HepG2 (cell line): ENCODE measurements at regions of chr20 and their contacts with region 1.

Region 1: DNA sequence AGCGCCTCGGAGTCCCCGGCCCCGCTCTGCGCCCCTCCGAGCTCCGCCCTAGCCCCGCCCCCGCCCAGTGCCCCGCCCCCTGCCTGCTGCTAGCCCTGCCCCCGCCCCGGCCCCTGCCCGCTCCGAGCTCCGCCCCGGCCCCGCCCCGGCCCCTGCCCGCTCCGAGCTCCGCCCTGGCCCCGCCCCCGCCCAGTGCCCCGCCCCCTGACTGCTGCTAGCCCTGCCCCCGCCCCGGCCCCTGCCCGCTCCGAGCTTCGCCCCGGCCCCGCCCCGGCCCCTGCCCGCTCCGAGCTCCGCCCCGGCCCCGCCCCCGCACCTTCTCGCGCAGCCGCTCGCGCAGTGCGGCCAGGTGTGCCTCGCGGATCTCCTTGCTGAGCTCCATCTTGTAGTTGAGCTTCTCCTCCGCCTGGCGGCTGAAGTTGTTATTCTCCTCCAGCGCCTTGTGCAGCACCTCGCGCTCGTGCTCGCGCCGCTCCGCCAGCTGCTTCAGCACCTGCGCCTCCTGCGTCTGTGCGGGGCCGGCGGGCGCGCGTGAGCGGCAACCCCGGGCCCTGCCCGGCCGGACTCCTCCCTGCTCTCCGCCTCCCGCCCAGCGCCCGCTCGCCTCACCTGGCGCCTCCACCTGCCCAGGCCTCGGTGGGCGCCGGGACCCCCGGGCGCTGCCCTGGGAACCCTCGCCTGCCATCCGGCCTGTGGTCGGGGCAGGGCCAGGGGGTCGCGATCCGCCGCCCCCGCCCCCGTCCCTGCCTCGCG is 11.3 kb downstream of the STMN3 start:
- DNase-seq: peak; percentile 90
- ATAC-seq: peak; percentile 77
- H3K4me3 ChIP-seq: peak overlapping the region; percentile 49 to 81 (median 63)
- H3K27ac ChIP-seq: peak overlapping the region; percentile 56
- H3K4me1 ChIP-seq: peaks cover 20% of the 10 kb centered on the region
- H3K27me3 ChIP-seq: no peaks in the 10 kb centered on the region; a peak in 1 of 5 replicates
- CTCF ChIP-seq: peak; percentile 74
- EP300 ChIP-seq: no peak
- POLR2A ChIP-seq: peak; percentile 41 to 73; a peak in 3 of 4 replicates
- RAD21 ChIP-seq: peak; percentile 90

Region 2: DNA sequence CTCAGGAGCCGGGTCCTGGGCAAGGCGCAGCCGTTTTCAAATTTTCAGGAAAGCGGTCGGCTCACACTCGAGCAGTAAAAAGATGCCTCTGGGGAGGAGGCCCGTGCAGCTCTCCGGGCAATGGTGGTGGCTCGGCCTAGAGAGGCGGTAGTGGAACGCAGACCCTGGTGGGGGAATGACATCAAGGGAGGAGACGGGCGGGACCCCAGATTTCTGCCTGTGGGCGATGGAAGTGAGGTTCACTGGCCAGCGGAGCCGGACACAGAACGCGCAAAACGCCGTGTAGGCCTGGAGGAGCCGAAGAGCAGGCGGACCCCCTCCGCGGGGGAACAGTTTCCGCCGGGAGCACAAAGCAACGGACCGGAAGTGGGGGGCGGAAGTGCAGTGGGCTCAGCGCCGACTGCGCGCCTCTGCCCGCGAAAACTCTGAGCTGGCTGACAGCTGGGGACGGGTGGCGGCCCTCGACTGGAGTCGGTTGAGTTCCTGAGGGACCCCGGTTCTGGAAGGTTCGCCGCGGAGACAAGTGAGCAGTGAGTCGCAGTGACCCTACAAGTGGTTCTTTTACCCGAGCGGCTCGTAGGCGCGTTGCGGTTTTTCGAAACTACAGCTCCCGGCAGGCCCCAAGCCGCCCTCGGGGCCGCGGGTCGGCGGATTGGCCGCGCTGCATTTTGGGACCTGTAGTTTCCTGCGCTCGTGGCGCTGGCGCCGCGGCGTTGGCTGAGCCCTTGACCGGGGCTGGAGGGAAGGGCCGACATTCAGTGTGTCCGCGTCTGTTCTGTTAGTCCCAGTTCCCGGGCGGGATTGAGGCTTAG is 16.2 kb after region 1 on chr20 and contains the start of gene RTEL1:
- CTCF ChIA-PET with region 1: no interaction called
- POLR2A ChIA-PET with region 1: interaction called, 58 read pairs
- in situ Hi-C with region 1: no loop called
- intact Hi-C with region 1: no loop called
- DNase-seq: peak; percentile 93
- ATAC-seq: peak; percentile 93
- H3K4me3 ChIP-seq: peak within 1 kb of the TSS; percentile 78 to 95 (median 94)
- H3K27ac ChIP-seq: peak within 1 kb of the TSS; percentile 65
- H3K4me1 ChIP-seq: peaks cover 40% of the 10 kb centered on the region
- H3K27me3 ChIP-seq: no peaks in the 10 kb centered on the region; a peak in 1 of 5 replicates
- CTCF ChIP-seq: no peak; the same call in 1 of the 2 replicates
- EP300 ChIP-seq: peak; percentile 24 to 66; a peak in 3 of 4 replicates
- POLR2A ChIP-seq: peak; percentile 74 to 78
- RAD21 ChIP-seq: peak; percentile 79
- total RNA-seq, gene RTEL1: 10.9 and 21.8 TPM in 2 replicates

Region 3: GRCh38 chr20:63686492-63687321 is 44.7 kb after region 1 on chr20:
- CTCF ChIA-PET with region 1: no interaction called
- POLR2A ChIA-PET with region 1: no interaction called
- in situ Hi-C with region 1: no loop called
- intact Hi-C with region 1: no loop called
- DNase-seq: no peak
- ATAC-seq: no peak
- H3K4me3 ChIP-seq: no peak overlapping the region
- H3K27ac ChIP-seq: no peak overlapping the region
- H3K4me1 ChIP-seq: peaks cover 10% of the 10 kb centered on the region
- H3K27me3 ChIP-seq: no peaks in the 10 kb centered on the region
- CTCF ChIP-seq: no peak
- EP300 ChIP-seq: no peak
- POLR2A ChIP-seq: no peak; a peak in 1 of 4 replicates
- RAD21 ChIP-seq: no peak

Region 4: GRCh38 chr20:63733186-63734081 is 91.5 kb after region 1 on chr20:
- CTCF ChIA-PET with region 1: no interaction called
- POLR2A ChIA-PET with region 1: no interaction called
- in situ Hi-C with region 1: no loop called
- intact Hi-C with region 1: no loop called
- DNase-seq: no peak
- ATAC-seq: no peak
- H3K4me3 ChIP-seq: no peak overlapping the region
- H3K27ac ChIP-seq: peak overlapping the region; percentile 93
- H3K4me1 ChIP-seq: peaks cover 48% of the 10 kb centered on the region
- H3K27me3 ChIP-seq: no peaks in the 10 kb centered on the region
- CTCF ChIP-seq: no peak
- EP300 ChIP-seq: no peak
- POLR2A ChIP-seq: no peak
- RAD21 ChIP-seq: no peak